Breast epithelium (tissue), 4 donors: ENCODE measurements at regions of chr22 and their contacts with region 1.

Region 1: GRCh38 chr22:46649141-46650077 is 29.2 kb downstream of the GRAMD4 start:
- DNase-seq: no peak
- H3K4me3 ChIP-seq: peak overlapping the region in 1 of 3 donors; percentile 5
- H3K27ac ChIP-seq: peak overlapping the region; percentile 18 to 64
- H3K4me1 ChIP-seq: peaks cover 0 to 10% of the 10 kb centered on the region in 2 donors
- H3K27me3 ChIP-seq: no peaks in the 10 kb centered on the region
- CTCF ChIP-seq: no peak
- POLR2A ChIP-seq: no peak

Region 2: DNA sequence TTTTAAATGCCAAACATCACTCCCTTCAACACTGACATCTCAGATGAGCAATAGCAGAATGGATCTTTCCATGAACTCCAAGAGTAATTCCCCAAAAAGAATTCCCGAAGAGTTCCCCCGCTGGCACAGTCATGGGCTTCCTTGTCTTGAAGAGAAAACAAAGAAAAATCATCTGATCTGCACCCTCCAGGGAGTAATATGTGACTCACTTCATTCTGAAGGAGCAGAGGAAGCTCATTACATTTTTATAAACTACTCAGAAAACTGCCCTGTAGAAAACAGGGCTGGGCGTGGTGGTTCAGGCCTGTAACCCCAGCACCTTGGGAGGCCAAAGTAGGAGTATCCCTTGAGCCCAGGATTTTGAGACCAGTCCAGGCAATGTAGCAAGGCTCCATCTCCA is 147.7 kb before region 1 on chr22:
- intact Hi-C with region 1: no loop called
- DNase-seq: no peak
- H3K4me3 ChIP-seq: no peak overlapping the region
- H3K27ac ChIP-seq: no peak overlapping the region
- H3K4me1 ChIP-seq: no peaks in the 10 kb centered on the region
- H3K27me3 ChIP-seq: no peaks in the 10 kb centered on the region
- CTCF ChIP-seq: no peak
- POLR2A ChIP-seq: no peak

Region 3: DNA sequence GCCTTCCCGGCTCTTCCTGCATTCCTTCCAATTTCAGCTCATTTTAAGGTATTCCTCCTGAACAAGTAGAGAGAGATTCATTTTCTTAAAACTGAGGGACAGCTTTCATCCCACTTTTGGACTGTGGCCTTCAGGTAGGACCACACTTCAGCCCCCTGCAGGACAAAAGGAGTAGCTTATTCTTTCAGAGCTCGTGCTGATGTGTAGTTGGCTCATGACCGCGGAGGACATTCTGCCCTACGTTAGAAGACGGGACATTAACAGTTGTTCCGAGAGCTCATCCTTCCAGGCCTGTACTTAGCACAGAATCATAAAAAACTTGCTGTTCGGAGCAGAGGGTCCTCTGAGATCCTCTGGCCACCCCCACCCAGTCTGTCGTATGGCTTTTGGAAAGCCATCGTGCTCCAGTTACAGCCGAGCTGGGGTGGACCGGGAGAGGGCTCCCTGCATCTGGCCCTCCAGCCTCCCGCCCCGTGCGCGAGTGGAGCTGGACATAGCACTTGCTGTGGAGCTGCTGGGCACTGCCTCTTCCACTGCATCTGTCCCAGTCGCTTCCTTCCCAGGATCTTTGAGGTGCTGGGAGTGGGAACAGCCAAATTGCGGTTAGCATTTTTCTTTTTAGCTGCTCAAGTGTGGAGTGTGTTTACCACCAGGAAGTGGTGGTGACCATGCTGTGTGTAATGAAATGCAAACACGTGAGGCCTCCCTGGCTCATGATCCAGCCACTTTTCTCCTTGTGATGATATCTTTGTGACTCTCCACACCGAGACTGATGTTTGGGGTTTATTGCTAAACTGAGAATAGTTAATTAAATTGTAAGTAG is 363.4 kb after region 1 on chr22:
- intact Hi-C with region 1: loop called (anchors 5 kb)
- DNase-seq: peak in 1 of 2 donors; percentile 62
- H3K4me3 ChIP-seq: no peak overlapping the region
- H3K27ac ChIP-seq: peak overlapping the region in 1 of 2 donors; percentile 15
- H3K4me1 ChIP-seq: no peaks in the 10 kb centered on the region
- H3K27me3 ChIP-seq: no peaks in the 10 kb centered on the region
- CTCF ChIP-seq: no peak
- POLR2A ChIP-seq: no peak